ENCODE measurements at regions of chr11 and their contacts with region 1.

Region 1: GRCh38 chr11:78228467-78228866 is 39.7 kb downstream of the USP35 start:
- DNase-seq: peak; percentile 86
- ATAC-seq: peak; percentile 81
- H3K4me3 ChIP-seq: no peak overlapping the region
- H3K27ac ChIP-seq: no peak overlapping the region
- H3K4me1 ChIP-seq: peaks cover 11% of the 10 kb centered on the region
- H3K27me3 ChIP-seq: no peaks in the 10 kb centered on the region
- CTCF ChIP-seq: peak; percentile 87

Region 2: GRCh38 chr11:78310500-78310909 is 82.0 kb after region 1 on chr11:
- CTCF ChIA-PET with region 1: no interaction called
- POLR2A ChIA-PET with region 1: no interaction called
- intact Hi-C with region 1: loop called (anchors 10 kb)
- DNase-seq: no peak
- ATAC-seq: no peak
- H3K4me3 ChIP-seq: no peak overlapping the region
- H3K27ac ChIP-seq: no peak overlapping the region
- H3K4me1 ChIP-seq: peaks cover 14% of the 10 kb centered on the region
- H3K27me3 ChIP-seq: no peaks in the 10 kb centered on the region
- CTCF ChIP-seq: no peak

Region 3: GRCh38 chr11:78564490-78565467 is 336.3 kb after region 1 on chr11:
- CTCF ChIA-PET with region 1: interaction called, 15 read pairs
- POLR2A ChIA-PET with region 1: interaction called, 5 read pairs
- intact Hi-C with region 1: loop called (anchors 1 kb)
- DNase-seq: peak; percentile 91
- ATAC-seq: peak; percentile 15; the same call in 1 of the 2 replicates
- H3K4me3 ChIP-seq: no peak overlapping the region
- H3K27ac ChIP-seq: no peak overlapping the region
- H3K4me1 ChIP-seq: peaks cover 62% of the 10 kb centered on the region
- H3K27me3 ChIP-seq: no peaks in the 10 kb centered on the region
- CTCF ChIP-seq: peak; percentile 89

Measured in PC-3 (cell line).